ENCODE measurements at regions of chr17 and their contacts with region 1.

Region 1: GRCh38 chr17:67376737-67377487 is at the start of gene PITPNC1:
- DNase-seq: peak; percentile 91
- H3K4me3 ChIP-seq: peak within 1 kb of the TSS; percentile 75
- H3K27ac ChIP-seq: peak within 1 kb of the TSS; percentile 82 to 96
- H3K4me1 ChIP-seq: peaks cover 10% of the 10 kb centered on the region
- H3K27me3 ChIP-seq: no peaks in the 10 kb centered on the region
- CTCF ChIP-seq: peak in 2 of 3 experiments; percentile 12 to 38
- POLR2A ChIP-seq: peak; percentile 38
- total RNA-seq, gene PITPNC1: 8.3 to 12.2 TPM

Region 2: DNA sequence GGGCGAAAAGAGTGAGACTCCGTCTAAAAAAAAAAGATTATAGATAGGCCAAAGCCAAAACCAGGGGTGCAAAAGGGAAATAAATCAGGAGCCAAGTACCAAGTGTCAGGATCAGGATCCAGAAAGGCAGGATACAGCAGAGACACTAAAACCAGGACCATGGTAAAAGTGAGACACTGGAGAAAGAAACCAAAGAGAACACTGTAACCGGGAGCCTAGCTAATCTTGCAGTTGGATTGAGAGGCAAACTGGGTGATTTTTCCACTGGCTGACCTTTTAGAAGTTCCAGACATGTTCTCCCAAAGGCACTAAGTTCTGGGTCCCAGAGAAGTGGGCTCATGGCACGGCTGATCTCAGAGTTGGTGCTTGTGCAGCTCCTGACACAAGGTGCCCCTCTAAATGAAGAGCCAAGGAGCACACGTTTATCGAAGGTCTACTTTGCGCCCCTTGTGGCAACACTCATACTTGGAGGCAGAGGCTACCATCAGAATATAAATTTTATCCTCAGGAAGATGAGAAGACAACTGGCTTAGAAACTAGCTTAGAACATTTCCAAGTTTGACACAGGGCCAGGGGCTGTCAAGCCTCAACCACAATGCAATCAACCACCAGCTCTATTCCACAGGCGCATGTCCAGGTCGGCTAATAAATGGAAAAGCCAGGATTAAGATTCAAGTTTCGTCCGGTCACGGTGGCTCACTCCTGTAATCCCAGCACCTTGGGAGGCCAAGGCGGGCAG is 104.4 kb before region 1 on chr17:
- intact Hi-C with region 1: no loop called
- DNase-seq: no peak
- H3K4me3 ChIP-seq: no peak overlapping the region
- H3K27ac ChIP-seq: no peak overlapping the region
- H3K4me1 ChIP-seq: no peaks in the 10 kb centered on the region
- H3K27me3 ChIP-seq: no peaks in the 10 kb centered on the region
- CTCF ChIP-seq: no peak
- POLR2A ChIP-seq: no peak

Region 3: GRCh38 chr17:67475236-67475937 is 98.5 kb after region 1 on chr17:
- intact Hi-C with region 1: loop called (anchors 10 kb)
- DNase-seq: peak; percentile 84
- H3K4me3 ChIP-seq: no peak overlapping the region
- H3K27ac ChIP-seq: no peak overlapping the region
- H3K4me1 ChIP-seq: peaks cover 8% of the 10 kb centered on the region
- H3K27me3 ChIP-seq: no peaks in the 10 kb centered on the region
- CTCF ChIP-seq: peak; percentile 45 to 68 (median 63)
- POLR2A ChIP-seq: no peak

Region 4: DNA sequence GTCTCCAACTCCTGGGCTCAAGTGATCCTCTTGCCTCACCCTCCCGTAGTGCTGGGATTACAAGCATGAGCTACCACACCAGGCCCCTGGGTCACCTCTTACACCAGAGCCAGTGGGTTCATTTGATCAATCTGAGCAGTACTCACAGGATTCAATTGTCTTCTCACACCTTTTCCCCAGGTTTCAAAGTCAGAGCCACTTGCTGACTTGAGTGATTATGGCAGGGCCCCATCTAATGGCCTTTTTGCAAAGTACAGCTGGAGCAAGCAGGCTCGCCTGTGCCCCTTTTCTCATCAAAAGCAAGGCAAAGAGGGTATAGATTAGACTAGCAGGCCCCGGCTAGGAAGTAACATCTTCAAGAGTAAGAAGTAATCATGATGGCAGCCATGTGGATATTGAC is 226.0 kb after region 1 on chr17:
- intact Hi-C with region 1: loop called (anchors 10 kb)
- DNase-seq: peak; percentile 62
- H3K4me3 ChIP-seq: no peak overlapping the region
- H3K27ac ChIP-seq: no peak overlapping the region
- H3K4me1 ChIP-seq: peaks cover 33% of the 10 kb centered on the region
- H3K27me3 ChIP-seq: no peaks in the 10 kb centered on the region
- CTCF ChIP-seq: peak; percentile 29 to 37 (median 31)
- POLR2A ChIP-seq: no peak

Region 5: DNA sequence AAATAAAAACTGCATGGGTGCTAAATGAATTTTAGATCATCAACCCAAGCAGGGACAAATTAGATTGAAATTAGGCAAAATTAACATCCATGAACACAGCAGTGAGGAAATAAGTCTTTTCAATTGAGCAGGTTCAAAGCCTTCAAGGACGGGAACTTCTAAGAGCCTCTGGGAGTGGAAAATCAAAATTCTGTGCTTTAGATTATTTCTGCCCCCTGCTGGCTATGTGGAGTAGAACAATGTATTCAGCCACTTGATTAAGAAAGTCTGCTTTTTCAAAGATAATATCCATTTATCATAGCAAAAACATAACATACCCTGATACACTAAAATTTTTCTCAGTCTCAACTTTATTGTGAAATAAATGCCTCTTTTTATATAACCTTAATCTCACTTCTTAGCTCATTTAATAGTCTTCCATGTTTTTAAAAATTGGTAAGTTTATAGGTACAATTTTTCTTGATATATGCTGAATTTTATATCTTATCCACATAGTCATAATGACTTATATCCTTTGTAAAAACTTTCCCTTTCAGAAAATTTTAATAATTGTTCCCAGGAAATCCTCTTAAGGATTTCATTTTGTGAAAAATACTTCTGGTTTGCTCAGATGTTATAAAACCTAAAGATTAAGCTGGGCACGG is 312.7 kb after region 1 on chr17:
- intact Hi-C with region 1: loop called (anchors 5 kb)
- DNase-seq: peak; percentile 81
- H3K4me3 ChIP-seq: no peak overlapping the region
- H3K27ac ChIP-seq: no peak overlapping the region
- H3K4me1 ChIP-seq: peaks cover 3% of the 10 kb centered on the region
- H3K27me3 ChIP-seq: no peaks in the 10 kb centered on the region
- CTCF ChIP-seq: peak; percentile 77 to 91 (median 90)
- POLR2A ChIP-seq: no peak